ENCODE measurements at regions of chr7 and their contacts with region 1.

Region 1: DNA sequence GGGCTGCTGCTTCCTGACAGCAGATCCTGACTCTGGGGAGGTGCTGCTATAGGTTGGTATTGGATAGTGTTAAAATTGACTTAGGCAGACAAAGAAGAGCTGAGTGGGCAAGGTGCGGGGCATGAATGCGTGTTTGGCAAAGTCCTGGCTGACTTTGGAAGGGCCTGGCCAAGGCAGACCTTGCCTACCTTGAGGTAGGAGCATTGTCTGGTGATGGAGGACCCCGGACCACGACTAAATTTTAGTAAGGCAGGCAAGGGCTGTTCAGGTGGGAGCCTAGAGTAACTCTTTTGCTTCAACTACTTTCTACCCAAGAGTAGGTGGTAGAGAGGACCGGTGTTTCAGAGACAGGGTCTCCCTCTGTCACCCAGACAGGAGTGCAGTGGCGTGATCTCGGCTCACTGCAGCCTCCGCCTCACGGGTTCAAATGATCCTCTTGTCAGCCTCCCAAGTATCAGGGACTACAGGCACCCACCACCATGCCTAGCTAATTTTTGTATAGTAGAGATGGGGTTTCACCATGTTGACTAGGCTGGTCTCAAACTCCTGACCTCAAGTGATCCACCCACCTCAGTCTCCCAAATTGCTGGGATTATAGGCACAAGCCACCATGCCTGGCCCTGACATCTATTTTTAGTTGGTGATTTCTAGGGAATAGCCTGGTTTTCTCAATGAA is 12.2 kb upstream of the LAT2 start:
- DNase-seq: no peak
- CTCF ChIP-seq: no peak

Region 2: GRCh38 chr7:74183613-74184450 is 13.8 kb before region 1 on chr7:
- CTCF ChIA-PET with region 1: interaction called, 21 read pairs
- POLR2A ChIA-PET with region 1: interaction called, 7 read pairs
- DNase-seq: no peak
- CTCF ChIP-seq: peak; percentile 42